ENCODE measurements at regions of chr6 and their contacts with region 1.

Region 1: DNA sequence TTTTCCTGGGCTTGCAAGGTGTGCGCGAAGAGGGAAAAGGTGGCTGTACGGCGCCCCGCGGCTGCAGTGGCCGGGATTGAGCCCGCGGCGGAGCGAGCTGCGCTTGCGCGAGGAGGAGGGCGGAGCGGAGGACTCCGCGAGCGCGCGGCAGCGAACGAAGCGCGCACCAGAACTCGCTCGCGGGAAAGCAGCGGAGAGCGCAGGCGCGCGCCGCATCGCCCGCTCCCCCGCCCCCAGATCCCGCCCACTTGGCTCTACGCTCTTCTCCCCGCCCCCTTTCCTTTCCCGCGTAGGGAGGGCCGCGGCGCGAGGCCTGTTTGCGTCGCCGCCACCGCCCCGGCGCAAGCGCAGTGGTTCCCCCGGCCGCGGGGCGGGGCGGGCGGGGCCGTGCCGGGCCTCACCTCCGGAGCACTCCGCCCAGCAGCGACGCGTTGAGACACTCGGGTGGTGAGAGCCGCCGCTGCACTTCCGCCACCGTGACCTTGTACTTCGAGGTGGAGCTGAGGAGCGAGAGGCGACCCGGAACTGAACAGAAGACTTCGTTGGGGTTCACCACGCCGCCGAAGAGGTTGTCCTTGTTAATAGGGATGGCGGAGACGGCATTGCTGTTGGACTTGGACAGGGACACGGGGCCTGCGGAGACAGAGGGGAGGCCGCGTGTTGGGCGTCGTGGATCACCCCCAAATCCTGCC is 10.6 kb downstream of the TFAP2A start:
- DNase-seq: peak; percentile 99
- ATAC-seq: peak; percentile 93
- H3K4me3 ChIP-seq: peak overlapping the region; percentile 68
- H3K27ac ChIP-seq: peak overlapping the region; percentile 90
- H3K4me1 ChIP-seq: peaks cover 17 to 35% of the 10 kb centered on the region in 2 experiments
- H3K27me3 ChIP-seq: no peaks in the 10 kb centered on the region
- CTCF ChIP-seq: peak; percentile 71 to 91 (median 83)
- EP300 ChIP-seq: peak; percentile 38; the same call in 1 of the 2 replicates
- POLR2A ChIP-seq: peak; percentile 96
- RAD21 ChIP-seq: peak; percentile 88 to 94

Region 2: GRCh38 chr6:10030942-10031537 is 373.2 kb before region 1 on chr6:
- CTCF ChIA-PET with region 1: no interaction called
- POLR2A ChIA-PET with region 1: no interaction called
- in situ Hi-C with region 1: no loop called
- intact Hi-C with region 1: loop called (anchors 2 kb)
- DNase-seq: peak; percentile 19 to 44 (median 36)
- ATAC-seq: peak; percentile 79
- H3K4me3 ChIP-seq: no peak overlapping the region
- H3K27ac ChIP-seq: no peak overlapping the region
- H3K4me1 ChIP-seq: no peaks in the 10 kb centered on the region
- H3K27me3 ChIP-seq: no peaks in the 10 kb centered on the region
- CTCF ChIP-seq: peak; percentile 34 to 72 (median 56); a peak in 4 of 6 replicates
- EP300 ChIP-seq: no peak
- POLR2A ChIP-seq: no peak
- RAD21 ChIP-seq: peak; percentile 61 to 67

Region 3: DNA sequence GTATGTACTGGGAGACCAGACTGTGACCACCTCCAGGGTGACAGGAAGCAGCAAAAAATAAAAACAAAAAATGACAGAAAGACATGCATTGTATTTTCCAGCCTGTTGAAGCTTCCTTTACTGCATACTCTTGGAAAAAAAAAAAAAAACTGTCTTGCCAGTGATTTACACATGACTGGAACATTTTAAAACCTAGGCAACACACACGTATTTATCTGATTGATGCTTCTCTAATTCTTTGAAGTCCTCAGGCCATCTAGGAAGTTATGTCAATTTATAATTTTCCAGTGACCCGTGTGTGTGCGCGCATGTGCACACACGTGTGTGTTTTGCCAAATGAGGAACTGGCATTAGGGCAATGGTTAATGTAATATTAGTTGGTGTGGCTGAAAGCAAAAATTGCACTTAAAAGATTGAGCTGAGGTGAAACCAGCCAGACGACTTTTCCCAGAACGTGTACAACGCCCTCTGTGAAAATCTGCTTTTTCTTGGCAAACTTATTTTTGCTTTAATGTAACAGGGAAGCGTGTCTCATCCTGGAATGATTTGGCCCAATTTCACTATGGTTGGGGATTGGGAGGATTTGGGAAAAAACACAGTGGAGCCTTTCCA is 304.6 kb before region 1 on chr6:
- CTCF ChIA-PET with region 1: no interaction called
- POLR2A ChIA-PET with region 1: no interaction called
- in situ Hi-C with region 1: no loop called
- intact Hi-C with region 1: loop called (anchors 5 kb)
- DNase-seq: no peak
- ATAC-seq: no peak
- H3K4me3 ChIP-seq: no peak overlapping the region
- H3K27ac ChIP-seq: no peak overlapping the region
- H3K4me1 ChIP-seq: peaks cover 10 to 19% of the 10 kb centered on the region in 2 experiments
- H3K27me3 ChIP-seq: no peaks in the 10 kb centered on the region
- CTCF ChIP-seq: no peak
- EP300 ChIP-seq: no peak
- POLR2A ChIP-seq: no peak
- RAD21 ChIP-seq: no peak

Region 4: DNA sequence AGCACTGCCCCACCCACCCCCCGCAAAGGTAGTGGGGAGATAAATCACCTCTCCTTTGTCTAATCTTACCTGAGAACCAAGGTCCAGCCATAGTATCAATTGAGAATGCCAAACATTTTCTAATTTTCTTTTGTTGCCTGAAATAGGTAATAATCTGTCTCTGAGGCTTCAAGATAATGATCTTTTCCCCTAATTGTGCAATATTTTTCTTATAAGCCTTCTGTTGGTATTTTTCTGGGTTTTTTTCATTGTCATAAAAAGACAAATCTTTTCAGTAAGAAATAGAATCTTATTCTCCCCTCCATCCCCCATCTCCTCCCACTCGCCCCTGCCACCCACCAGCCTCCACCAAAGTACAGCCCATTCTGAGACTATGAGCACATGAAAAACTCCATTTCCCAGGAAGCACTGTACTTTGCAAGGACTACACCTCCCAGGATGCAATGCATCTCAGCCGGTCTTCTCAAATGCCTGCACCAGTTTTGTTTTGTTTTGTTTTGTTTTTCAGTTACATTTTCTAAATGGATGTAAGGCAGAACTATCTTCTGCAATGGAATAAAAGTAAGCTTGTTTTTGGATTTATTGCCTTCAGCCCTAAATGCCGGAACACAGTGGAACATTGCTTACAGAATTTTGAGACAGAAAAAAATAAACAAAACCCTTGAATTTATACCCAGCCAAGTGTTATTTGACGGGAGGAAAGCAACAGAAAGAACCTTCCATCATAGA is 257.4 kb before region 1 on chr6:
- CTCF ChIA-PET with region 1: no interaction called
- POLR2A ChIA-PET with region 1: no interaction called
- in situ Hi-C with region 1: no loop called
- intact Hi-C with region 1: loop called (anchors 5 kb)
- DNase-seq: peak; percentile 65 to 70 (median 66)
- ATAC-seq: peak; percentile 100
- H3K4me3 ChIP-seq: peak overlapping the region; percentile 19
- H3K27ac ChIP-seq: no peak overlapping the region
- H3K4me1 ChIP-seq: no peaks in the 10 kb centered on the region
- H3K27me3 ChIP-seq: peaks cover 0 to 4% of the 10 kb centered on the region in 2 experiments; a peak in 1 of 5 replicates
- CTCF ChIP-seq: no peak
- EP300 ChIP-seq: no peak
- POLR2A ChIP-seq: no peak
- RAD21 ChIP-seq: no peak

Region 5: DNA sequence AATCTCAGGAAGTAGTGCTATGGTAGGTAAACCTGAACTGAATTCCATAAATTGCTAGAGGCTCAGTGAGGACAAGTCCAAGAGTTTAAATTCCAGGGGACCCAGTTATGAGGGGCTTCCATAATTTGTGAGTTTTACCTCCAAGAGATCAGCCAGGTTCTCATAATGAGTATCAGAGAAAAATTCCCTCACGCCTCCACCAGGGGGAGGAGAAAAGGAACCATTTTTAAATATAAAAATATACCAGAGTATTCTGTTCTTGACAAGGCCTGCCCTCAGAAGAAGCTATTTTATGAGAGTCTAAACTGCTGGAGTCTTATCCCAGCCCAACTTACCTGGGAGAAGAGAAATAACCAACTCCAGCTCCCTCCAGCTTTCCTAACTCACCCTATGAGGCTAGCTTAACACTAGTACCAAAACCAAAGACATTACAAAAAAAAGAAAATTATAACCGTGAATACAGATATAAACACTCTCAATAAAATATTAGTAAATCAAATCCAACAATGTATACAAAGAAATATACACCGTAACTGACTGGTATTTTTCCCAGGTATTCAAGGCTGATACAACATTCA is 148.1 kb before region 1 on chr6:
- CTCF ChIA-PET with region 1: no interaction called
- POLR2A ChIA-PET with region 1: no interaction called
- in situ Hi-C with region 1: no loop called
- intact Hi-C with region 1: loop called (anchors 1 kb)
- DNase-seq: peak; percentile 31 to 48 (median 33)
- ATAC-seq: peak; percentile 73
- H3K4me3 ChIP-seq: no peak overlapping the region
- H3K27ac ChIP-seq: no peak overlapping the region
- H3K4me1 ChIP-seq: no peaks in the 10 kb centered on the region
- H3K27me3 ChIP-seq: no peaks in the 10 kb centered on the region
- CTCF ChIP-seq: peak; percentile 46 to 60 (median 46); a peak in 5 of 6 replicates
- EP300 ChIP-seq: no peak
- POLR2A ChIP-seq: no peak
- RAD21 ChIP-seq: peak in 1 of 2 experiments; percentile 49; a peak in 3 of 4 replicates

Region 6: DNA sequence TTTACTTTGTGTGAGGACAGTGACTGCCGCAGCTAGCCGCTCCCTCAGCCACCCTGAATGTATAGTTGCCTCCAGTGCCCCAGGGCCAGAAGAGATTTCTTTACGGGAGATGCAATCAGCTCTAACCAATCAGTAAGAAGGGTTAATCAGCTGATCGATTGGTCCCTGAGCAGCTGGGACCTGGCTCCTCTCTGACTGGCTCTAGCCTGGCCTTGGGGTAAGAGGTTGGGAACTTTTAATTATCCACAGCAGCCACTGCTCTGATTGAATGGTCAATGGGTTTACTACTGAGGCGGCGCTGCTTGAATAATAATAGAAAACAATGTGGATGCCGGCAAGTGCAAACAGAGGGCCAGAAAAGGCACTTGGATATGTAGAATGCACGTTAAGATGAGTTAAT is 89.2 kb before region 1 on chr6:
- CTCF ChIA-PET with region 1: no interaction called
- POLR2A ChIA-PET with region 1: interaction called, 3 read pairs
- in situ Hi-C with region 1: no loop called
- intact Hi-C with region 1: loop called (anchors 1 kb)
- DNase-seq: peak in 2 of 4 experiments; percentile 13
- ATAC-seq: peak; percentile 10
- H3K4me3 ChIP-seq: no peak overlapping the region
- H3K27ac ChIP-seq: peak overlapping the region; percentile 54; the same call in 1 of the 3 replicates
- H3K4me1 ChIP-seq: peaks cover 20 to 37% of the 10 kb centered on the region in 2 experiments
- H3K27me3 ChIP-seq: peaks cover 0 to 4% of the 10 kb centered on the region in 2 experiments; a peak in 2 of 5 replicates
- CTCF ChIP-seq: no peak
- EP300 ChIP-seq: no peak
- POLR2A ChIP-seq: no peak
- RAD21 ChIP-seq: no peak

Region 7: DNA sequence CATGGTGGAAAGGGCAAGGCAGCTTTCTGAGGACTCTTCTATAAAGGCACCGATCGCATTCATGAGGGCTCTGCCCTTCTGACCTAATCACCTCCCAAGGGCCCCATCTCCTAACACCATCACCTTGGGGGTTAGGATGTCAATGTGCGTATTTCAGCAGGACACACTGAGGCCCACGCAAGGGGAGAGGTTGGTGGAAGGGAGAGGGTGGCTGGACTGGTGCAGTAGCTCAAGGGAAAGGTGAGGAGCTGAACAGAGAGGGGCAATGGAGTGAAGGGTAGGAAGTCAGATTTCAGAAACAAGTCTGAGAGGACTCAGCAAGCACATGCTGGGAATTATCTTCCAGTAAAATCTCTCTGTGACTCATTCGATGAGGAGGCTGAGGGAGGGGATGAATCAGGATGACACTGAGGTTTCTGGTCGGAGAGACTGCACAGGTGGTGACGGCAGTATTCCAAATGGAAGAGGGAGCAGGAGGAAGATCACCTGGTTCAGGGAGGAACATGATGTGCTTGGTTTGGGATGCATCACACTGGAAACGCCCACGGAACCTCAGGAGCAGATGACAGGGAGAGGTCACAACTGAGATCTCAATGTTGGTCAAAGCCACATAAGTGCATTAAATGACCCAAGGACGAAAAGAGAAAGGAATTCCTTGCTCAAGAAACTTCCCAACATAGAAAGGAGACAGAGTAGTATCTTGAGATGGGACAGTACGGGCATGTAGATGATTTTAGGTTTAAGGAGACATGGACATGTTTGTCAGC is 56.5 kb before region 1 on chr6:
- CTCF ChIA-PET with region 1: no interaction called
- POLR2A ChIA-PET with region 1: interaction called, 3 read pairs
- in situ Hi-C with region 1: no loop called
- intact Hi-C with region 1: loop called (anchors 5 kb)
- DNase-seq: peak in 2 of 4 experiments; percentile 76 to 81
- ATAC-seq: peak; percentile 91
- H3K4me3 ChIP-seq: no peak overlapping the region
- H3K27ac ChIP-seq: peak overlapping the region; percentile 65; the same call in 2 of the 3 replicates
- H3K4me1 ChIP-seq: peaks cover 10 to 11% of the 10 kb centered on the region in 2 experiments
- H3K27me3 ChIP-seq: no peaks in the 10 kb centered on the region
- CTCF ChIP-seq: no peak
- EP300 ChIP-seq: peak; percentile 87
- POLR2A ChIP-seq: no peak
- RAD21 ChIP-seq: no peak

Measured in K562 (cell line).